Sigmoid colon (tissue), 7 donors: ENCODE measurements at regions of chr7 and their contacts with region 1.

Region 1: DNA sequence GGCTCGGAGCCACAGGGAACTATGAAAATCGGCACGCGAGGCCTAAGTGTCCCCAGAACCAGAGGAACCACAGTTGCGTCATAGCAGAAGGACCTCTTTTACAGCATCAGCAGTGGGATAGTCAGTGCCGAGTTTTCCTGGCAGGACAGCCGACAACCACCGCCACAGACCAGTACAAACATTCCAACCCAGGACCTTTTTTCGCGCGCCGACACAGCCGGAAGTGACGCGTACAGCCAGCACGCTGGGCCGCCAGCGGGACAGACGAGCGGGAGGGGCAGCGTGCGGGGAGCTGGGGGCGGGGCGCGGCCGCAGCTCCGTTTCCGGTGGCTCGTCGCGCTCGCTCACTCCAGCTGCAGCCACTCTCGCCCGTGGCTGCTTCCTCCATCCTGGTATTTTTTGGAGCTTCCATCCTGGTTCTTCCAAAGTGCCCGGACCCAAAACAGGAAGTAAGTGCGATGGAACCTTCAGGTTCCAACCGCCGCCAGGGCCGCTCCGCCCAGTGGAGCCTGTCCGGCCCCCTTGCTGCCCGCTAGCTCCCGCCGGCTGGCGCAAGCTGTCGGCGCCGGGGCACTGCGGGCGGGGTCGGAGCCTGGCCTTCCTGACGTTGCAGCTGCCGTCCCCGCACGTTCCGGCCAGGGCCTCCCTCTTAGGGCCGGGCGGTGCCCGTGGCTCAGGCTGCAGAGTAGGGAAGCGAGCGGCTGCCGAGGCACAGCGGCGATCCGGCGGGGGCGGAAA is at the start of gene DMTF1:
- DNase-seq: peak; percentile 98
- H3K4me3 ChIP-seq: peak within 1 kb of the TSS; percentile 68 to 85 (median 81)
- H3K27ac ChIP-seq: peak within 1 kb of the TSS; percentile 92 to 97 (median 96)
- H3K4me1 ChIP-seq: peaks cover 0 to 47% (median 46%) of the 10 kb centered on the region in 4 donors
- H3K27me3 ChIP-seq: no peaks in the 10 kb centered on the region
- CTCF ChIP-seq: no peak
- EP300 ChIP-seq: peak in 2 of 4 donors; percentile 6 to 54
- POLR2A ChIP-seq: peak; percentile 76 to 78
- total RNA-seq, gene DMTF1: 69.9 to 134 (median 81.4) TPM

Region 2: GRCh38 chr7:86939197-86939814 is 213.0 kb before region 1 on chr7:
- intact Hi-C with region 1: loop called (anchors 5 kb)
- DNase-seq: no peak
- H3K4me3 ChIP-seq: no peak overlapping the region
- H3K27ac ChIP-seq: no peak overlapping the region
- H3K4me1 ChIP-seq: no peaks in the 10 kb centered on the region
- H3K27me3 ChIP-seq: no peaks in the 10 kb centered on the region
- CTCF ChIP-seq: peak; percentile 27 to 76 (median 56)
- EP300 ChIP-seq: no peak
- POLR2A ChIP-seq: no peak

Region 3: GRCh38 chr7:87027900-87028299 is 124.4 kb before region 1 on chr7:
- intact Hi-C with region 1: no loop called
- DNase-seq: no peak
- H3K4me3 ChIP-seq: no peak overlapping the region
- H3K27ac ChIP-seq: no peak overlapping the region
- H3K4me1 ChIP-seq: no peaks in the 10 kb centered on the region
- H3K27me3 ChIP-seq: no peaks in the 10 kb centered on the region
- CTCF ChIP-seq: no peak
- EP300 ChIP-seq: no peak
- POLR2A ChIP-seq: no peak

Region 4: GRCh38 chr7:87059525-87060287 is 92.6 kb before region 1 on chr7 and contains the start of gene ELAPOR2:
- intact Hi-C with region 1: loop called (anchors 2 kb)
- DNase-seq: peak; percentile 86
- H3K4me3 ChIP-seq: peak within 1 kb of the TSS; percentile 43 to 81 (median 64)
- H3K27ac ChIP-seq: peak within 1 kb of the TSS; percentile 56 to 74 (median 61)
- H3K4me1 ChIP-seq: peaks cover 0 to 13% (median 12%) of the 10 kb centered on the region in 4 donors
- H3K27me3 ChIP-seq: no peaks in the 10 kb centered on the region
- CTCF ChIP-seq: peak in 1 of 4 experiments; percentile 32
- EP300 ChIP-seq: no peak
- POLR2A ChIP-seq: no peak
- total RNA-seq, gene ELAPOR2: 7.3 to 15.3 (median 8.9) TPM

Region 5: DNA sequence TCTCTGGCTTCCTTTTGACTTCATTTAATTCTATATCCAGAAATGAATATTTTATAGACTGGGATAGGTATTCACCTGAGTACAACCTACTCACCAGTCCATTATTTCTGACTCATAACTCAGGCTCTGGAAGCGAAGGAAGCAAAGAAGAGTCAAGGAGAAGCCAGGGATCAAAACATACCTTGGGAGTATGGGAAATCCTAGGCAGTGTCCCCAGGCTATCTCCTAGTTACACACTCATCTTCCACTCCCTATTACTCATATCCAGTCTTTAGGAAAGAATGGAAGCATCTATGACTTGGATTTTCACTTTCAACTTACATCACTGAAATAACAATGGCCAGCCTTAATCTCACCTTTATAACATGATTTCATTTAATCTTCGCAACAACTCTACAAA is 52.0 kb before region 1 on chr7:
- intact Hi-C with region 1: no loop called
- DNase-seq: no peak
- H3K4me3 ChIP-seq: no peak overlapping the region
- H3K27ac ChIP-seq: no peak overlapping the region
- H3K4me1 ChIP-seq: no peaks in the 10 kb centered on the region
- H3K27me3 ChIP-seq: no peaks in the 10 kb centered on the region
- CTCF ChIP-seq: no peak
- EP300 ChIP-seq: no peak
- POLR2A ChIP-seq: no peak

Region 6: DNA sequence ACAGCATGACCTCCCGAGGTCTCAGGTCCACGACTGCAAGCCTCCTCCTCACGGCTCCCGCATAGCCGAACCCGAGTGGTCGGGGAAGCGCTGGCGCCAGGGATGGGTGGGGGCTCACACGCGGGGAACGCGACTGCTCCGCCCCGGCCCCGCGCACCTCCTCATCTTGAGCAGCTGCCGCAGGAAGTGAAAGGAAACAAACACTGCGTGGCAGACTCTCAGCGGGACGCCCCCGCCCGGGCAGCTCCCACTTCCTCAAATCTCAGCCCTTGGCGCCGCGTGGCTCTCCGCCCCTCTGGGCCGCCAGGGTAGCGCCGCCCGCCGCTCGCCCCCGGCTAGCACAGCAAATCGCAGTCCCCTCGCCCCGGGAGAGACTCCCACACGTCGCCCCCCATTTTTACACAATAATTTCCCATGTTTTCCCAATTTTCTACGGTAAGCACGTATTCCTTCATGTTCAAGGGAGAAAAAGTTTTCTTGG is 67.3 kb after region 1 on chr7 and contains the start of gene TMEM243:
- intact Hi-C with region 1: loop called (anchors 2 kb)
- DNase-seq: peak; percentile 86
- H3K4me3 ChIP-seq: peak within 1 kb of the TSS; percentile 75 to 86 (median 84)
- H3K27ac ChIP-seq: peak within 1 kb of the TSS; percentile 83 to 86 (median 85)
- H3K4me1 ChIP-seq: peaks cover 0 to 32% (median 17%) of the 10 kb centered on the region in 4 donors
- H3K27me3 ChIP-seq: no peaks in the 10 kb centered on the region
- CTCF ChIP-seq: no peak
- EP300 ChIP-seq: no peak
- POLR2A ChIP-seq: peak in 1 of 2 donors; percentile 25
- total RNA-seq, gene TMEM243: 26.9 to 37.7 (median 30.4) TPM

Region 7: DNA sequence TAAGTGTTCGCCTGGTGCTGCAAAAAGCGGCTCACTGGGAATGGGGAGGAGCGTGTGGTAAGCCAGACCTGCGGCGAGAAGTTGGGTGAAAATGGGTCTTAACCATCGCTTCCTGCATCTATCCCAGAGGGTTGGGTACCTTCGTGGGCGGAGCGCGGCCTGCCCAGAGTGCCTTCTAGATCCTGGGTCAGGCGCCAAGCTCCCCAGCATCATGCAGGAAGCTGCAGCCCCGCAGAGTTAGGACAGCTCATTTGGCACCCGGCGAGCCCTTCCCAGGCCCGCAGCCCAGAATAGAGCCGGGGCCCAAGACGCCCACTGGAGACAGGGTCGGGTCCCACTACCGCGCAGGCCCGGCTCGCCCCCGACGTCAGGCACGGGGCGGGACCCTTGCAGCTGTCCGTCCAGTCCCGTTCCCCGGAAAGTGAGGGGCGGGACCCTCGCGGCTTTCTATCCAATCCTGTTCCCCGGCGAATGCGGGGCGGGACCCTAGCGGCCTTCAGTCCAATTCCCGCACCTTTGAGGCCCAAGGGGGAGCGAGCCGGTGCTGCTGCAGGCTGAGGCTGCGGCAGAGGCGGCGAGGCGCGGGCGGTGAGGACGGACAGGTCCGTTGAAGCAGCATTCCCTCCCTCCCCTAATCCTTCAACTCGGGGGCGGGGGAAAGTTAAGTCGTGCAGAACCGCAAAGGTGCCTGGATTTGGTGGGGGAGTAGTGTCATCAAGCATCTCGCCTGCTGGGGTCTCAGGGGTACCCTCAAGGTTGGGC is 193.1 kb after region 1 on chr7 and contains the start of gene CROT:
- intact Hi-C with region 1: loop called (anchors 10 kb)
- DNase-seq: peak; percentile 98
- H3K4me3 ChIP-seq: peak within 1 kb of the TSS; percentile 58 to 67 (median 61)
- H3K27ac ChIP-seq: peak within 1 kb of the TSS; percentile 86 to 93 (median 88)
- H3K4me1 ChIP-seq: peaks cover 0 to 31% (median 21%) of the 10 kb centered on the region in 4 donors
- H3K27me3 ChIP-seq: no peaks in the 10 kb centered on the region
- CTCF ChIP-seq: peak in 1 of 4 experiments; percentile 17
- EP300 ChIP-seq: peak in 1 of 4 donors; percentile 10
- POLR2A ChIP-seq: peak; percentile 34 to 60
- total RNA-seq, gene CROT: 12.9 to 15.6 (median 14.0) TPM

Region 8: GRCh38 chr7:87876040-87876868 is 724.0 kb after region 1 on chr7 and contains the starts of genes DBF4 and SLC25A40:
- intact Hi-C with region 1: loop called (anchors 5 kb)
- DNase-seq: peak; percentile 96
- H3K4me3 ChIP-seq: peak within 1 kb of the TSS; percentile 77 to 89 (median 87)
- H3K27ac ChIP-seq: peak within 1 kb of the TSS; percentile 89 to 96 (median 94)
- H3K4me1 ChIP-seq: peaks cover 3 to 31% (median 22%) of the 10 kb centered on the region in 4 donors
- H3K27me3 ChIP-seq: no peaks in the 10 kb centered on the region
- CTCF ChIP-seq: no peak
- EP300 ChIP-seq: no peak
- POLR2A ChIP-seq: peak in 1 of 2 donors; percentile 9
- total RNA-seq, gene DBF4: 2.3 to 6.4 (median 3.0) TPM
- total RNA-seq, gene SLC25A40: 17.4 to 46.8 (median 21.9) TPM